Astrocyte of the cerebellum (primary cell): ENCODE measurements at regions of chr11 and their contacts with region 1.

Region 1: GRCh38 chr11:31601635-31602282 is 92.2 kb downstream of the ELP4 start:
- DNase-seq: no peak
- H3K4me3 ChIP-seq: no peak overlapping the region
- CTCF ChIP-seq: no peak

Region 2: DNA sequence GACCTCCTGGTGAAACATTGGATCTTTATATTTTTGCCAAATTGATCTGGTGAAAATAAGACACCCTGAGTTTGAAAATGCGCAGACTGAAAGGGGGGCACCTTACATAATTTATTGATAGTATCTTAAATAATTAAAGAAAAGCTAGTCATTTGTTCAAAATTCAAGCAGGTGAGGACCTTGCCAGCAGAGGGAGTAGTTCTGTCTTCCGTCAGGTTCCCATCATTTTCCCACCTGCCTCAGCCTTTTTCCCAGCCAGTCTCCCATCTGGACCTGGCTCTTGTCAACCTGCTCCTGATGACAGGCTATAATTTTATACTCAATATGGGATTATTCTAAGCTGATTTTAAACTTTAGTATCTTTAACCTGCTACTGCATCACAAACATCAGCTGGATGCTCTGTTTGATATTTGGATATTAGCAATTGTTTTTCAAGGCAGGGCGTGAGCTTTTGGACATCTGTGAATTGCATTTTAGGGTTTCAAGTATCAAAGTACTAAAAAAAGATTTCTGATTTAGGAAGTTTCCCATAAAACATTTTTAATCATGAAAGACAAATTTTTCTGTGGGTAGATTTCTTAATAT is 39.8 kb after region 1 on chr11:
- in situ Hi-C with region 1: loop called (anchors 5 kb)
- DNase-seq: peak; percentile 37
- H3K4me3 ChIP-seq: no peak overlapping the region
- CTCF ChIP-seq: peak; percentile 68

Region 3: GRCh38 chr11:31947051-31947769 is 345.5 kb after region 1 on chr11:
- in situ Hi-C with region 1: no loop called
- DNase-seq: no peak
- H3K4me3 ChIP-seq: no peak overlapping the region
- CTCF ChIP-seq: no peak